Head of caudate nucleus (tissue), 42 donors: ENCODE measurements at regions of chr19 and their contacts with region 1.

Region 1: DNA sequence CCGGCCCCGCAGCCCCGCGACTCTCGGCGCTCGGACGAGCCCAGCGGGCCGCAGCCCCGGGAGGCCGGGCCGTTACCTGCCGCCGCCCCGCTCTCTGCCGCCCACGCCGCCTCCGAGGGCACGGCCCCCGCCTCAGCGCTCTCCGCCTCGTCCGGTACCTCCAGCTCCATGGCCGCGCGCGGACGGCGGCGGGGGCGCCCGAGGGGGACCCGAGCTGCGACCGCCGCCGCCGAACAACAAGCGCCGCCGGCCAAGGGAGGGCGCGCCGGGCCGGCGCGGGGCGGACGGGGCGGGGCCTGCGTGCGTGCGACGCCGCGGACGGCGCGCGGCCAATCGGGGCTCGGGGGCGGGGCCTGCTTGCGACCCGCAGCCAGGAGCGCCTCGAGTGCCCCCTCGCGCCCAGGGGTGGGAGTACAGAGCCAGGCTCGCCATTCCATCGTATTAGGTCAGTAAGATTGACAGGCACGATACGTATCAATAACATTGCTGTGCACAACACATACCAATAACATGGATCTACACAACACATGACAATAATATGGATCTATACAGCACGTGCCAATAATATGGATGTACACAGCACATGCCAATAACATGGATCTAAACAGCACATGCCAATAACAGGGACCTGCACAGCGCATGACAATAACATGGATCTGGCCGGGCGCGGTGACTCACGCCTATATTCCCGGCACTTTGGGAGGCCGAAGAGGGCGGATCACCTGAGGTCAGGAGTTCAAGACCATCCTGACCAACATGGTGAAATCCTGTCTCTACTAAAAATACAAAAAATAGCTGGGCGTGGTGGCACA is at the start of gene PIP5K1C:
- DNase-seq: peak; percentile 85 to 97 (median 94)

Region 2: DNA sequence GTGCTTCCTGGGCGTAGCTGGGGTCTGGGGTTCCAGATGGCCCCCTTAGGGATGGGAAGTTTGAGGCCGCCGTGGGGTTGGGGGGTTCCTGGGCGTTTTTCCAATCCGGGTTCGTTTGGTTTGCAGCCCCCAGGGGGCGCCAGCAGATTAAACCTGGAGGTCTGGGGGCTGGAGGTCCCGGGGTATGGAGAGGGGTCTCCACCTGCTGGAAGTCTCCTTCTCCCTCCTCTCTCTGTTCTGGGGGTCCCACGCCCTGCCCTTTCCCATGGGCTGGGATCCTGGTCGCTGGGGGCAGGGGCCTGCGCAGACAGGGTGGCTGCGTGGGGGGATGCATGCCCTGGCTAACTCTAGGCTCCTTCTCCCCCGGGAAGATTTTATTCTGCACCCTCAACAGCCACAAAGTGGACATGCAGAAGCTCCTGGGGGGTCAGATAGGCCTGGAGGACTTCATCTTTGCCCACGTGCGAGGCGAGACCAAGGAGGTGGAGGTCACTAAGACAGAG is 114.3 kb before region 1 on chr19:
- intact Hi-C with region 1: no loop called
- DNase-seq: no peak

Region 3: DNA sequence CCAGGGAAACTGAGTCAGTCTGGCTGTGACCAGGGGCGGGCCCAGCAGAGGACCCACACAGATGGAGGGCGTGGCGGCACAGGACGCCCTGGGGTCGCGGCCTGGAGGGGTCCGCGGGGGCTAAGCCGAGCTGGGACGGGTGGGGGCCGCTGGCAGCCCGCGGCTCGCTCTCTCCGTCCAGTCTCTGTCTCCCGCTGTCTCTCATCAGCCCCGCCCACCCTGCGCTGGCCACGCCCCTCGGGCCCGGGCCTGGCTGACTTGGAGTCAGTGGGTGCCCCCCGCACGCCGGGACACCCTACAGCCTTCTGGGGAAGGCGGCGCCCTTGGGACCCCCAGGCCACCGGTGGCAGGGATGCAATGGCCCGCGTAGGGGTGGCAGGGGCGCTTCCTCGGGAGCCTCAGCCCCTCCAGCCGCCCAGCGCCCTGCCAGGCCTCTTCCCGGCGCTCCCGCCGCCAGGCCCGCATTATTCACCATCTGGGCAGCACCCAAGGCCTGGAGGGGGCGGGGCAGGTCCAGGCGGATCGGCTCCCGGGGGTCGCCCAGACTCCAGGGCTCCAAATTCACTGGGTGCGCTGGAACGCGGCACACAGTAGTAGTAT is 93.6 kb before region 1 on chr19 and contains the start of gene TBXA2R:
- intact Hi-C with region 1: no loop called
- DNase-seq: peak in 38 of 42 donors; percentile 21 to 82 (median 52)

Region 4: DNA sequence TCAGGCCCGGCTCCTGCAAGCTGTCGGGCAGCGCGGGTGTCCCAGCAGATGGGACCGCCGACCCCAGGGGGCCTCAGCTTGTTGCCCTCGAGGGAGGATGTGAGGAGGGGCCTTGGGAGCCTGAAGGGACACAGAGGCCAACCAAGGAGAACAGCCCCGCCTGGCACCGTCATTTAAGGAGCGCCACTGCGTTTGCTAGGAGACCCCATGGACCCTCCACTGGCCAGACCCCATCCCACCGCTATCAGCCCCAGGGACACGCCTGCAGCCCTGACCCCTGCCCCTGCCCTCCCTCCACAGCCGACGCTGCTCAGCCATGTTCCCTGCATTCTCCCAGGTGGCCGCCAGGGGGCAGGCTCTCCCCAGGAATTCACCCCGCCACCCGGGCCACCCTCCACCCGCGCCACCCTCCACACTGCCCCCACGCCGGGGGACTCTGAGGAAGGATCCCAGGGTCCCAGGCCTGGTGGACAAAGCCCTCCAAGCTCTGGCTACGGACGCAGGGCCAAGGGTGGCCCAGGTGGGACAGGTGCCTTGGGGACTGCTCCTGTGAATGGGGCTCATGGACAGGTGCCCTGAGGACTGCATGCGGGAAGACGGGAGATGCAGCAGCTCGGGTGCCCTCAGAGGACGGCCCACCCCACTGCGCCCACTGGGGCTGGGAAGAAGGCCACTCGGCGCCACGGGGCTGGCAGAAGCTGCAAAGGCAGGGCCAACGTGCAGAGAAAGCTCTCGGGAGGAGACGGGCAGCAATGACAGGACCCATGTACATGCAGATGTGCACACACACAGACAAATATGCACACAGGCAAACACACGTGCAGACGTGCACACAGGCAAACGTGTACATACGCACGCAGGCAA is 34.5 kb before region 1 on chr19:
- intact Hi-C with region 1: loop called (anchors 5 kb)
- DNase-seq: peak; percentile 33 to 92 (median 78)